ENCODE measurements at regions of chr17 and their contacts with region 1.

Region 1: DNA sequence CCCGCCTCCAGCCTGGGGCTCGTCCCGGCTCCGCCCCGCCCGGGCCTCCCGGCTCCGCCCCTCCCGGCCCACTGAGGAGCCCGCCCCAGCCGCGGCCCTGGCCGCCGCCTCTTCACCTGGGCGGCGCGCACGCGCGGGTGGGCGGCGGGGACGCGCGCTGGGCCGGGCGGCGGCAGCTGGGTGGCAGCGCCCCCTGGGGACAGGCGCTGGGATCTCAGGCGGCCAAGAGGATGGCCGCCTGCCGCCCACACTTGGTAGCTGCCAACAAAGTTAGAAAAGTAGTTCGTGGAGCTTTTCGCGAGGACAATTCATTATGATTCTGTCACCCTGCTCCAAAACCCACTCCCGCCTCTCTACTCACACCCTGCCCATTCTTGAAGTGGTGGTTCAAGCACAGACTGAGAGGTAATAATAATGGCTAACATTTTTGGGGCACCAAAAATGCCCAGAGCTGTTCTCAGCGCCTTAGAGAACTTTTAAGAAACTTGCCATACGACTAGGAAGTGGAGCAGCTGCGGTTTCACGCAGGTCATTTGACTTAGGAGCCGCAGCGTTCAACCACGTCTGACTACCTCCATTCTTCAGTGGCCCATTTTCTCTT is 340 bp upstream of the MYO1D start:
- DNase-seq: peak; percentile 90
- ATAC-seq: peak; percentile 98
- H3K4me3 Mint-ChIP-seq: peak overlapping the region; percentile 63
- H3K27ac Mint-ChIP-seq: peak overlapping the region; percentile 75
- H3K4me1 Mint-ChIP-seq: peaks cover 15% of the 10 kb centered on the region
- H3K27me3 Mint-ChIP-seq: peaks cover 2% of the 10 kb centered on the region
- CTCF ChIP-seq: peak; percentile 59

Region 2: DNA sequence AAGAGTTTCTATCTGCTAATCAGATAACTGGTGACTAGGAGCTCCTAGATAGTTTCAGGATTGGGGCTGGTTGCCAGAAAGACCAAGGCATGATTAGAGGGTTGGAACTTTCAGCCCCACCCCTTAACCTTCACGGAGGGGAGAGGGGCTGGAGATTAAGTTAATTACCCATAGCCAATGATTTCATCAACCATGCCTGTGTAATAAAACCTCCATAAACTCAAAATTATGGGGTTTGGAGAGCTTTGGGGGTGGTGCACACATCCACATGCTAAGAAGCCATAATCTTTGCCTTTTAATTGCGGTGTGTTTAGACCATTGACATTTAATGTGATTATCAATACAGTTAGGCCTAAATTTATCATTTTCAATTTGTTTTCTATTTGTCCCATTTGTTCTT is 228.8 kb before region 1 on chr17:
- CTCF ChIA-PET with region 1: no interaction called
- POLR2A ChIA-PET with region 1: no interaction called
- intact Hi-C with region 1: no loop called
- DNase-seq: no peak
- ATAC-seq: no peak
- H3K4me3 Mint-ChIP-seq: no peak overlapping the region
- H3K27ac Mint-ChIP-seq: no peak overlapping the region
- H3K4me1 Mint-ChIP-seq: no peaks in the 10 kb centered on the region
- H3K27me3 Mint-ChIP-seq: no peaks in the 10 kb centered on the region
- CTCF ChIP-seq: no peak

Region 3: DNA sequence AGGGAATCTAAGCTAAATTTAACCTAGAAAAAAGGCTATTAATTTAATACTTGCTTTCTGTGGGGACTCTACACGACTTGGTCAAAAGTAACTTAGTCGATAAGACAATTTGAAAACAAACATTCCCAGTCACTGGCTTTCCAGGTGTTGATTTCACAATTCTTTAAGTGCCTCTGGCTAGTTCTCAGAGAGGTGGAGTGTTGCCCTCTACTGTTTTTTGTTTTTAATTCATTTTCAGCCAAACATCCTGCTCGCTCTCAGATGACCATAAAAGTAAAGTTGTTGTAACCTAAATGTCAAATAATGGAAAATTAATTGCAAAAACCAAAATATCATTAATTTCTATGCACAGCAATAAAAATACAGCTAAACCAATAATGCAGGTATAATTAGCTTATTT is 107.4 kb before region 1 on chr17:
- CTCF ChIA-PET with region 1: interaction called, 17 read pairs
- POLR2A ChIA-PET with region 1: no interaction called
- intact Hi-C with region 1: no loop called
- DNase-seq: no peak
- ATAC-seq: no peak
- H3K4me3 Mint-ChIP-seq: no peak overlapping the region
- H3K27ac Mint-ChIP-seq: no peak overlapping the region
- H3K4me1 Mint-ChIP-seq: no peaks in the 10 kb centered on the region
- H3K27me3 Mint-ChIP-seq: no peaks in the 10 kb centered on the region
- CTCF ChIP-seq: no peak

Region 4: DNA sequence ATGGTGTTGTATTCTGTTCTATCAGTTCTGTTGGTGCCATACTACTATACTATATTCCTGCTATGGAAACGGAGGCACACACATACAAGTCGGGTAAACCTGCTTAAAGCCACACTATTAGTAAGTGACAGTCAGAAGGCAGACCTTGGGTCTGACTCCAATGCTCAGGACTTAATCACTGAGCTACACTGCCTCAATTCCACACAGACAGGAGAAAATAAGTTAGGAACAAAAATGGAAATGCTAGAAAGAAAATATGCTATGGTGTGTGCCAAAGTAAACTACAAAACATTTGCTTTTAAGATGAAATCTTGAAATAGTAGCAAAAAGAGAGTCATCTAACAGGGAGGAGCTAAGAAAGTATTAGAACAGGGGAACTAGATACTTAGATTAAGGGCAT is 48.4 kb before region 1 on chr17:
- CTCF ChIA-PET with region 1: interaction called, 24 read pairs
- POLR2A ChIA-PET with region 1: no interaction called
- intact Hi-C with region 1: no loop called
- DNase-seq: no peak
- ATAC-seq: no peak
- H3K4me3 Mint-ChIP-seq: no peak overlapping the region
- H3K27ac Mint-ChIP-seq: no peak overlapping the region
- H3K4me1 Mint-ChIP-seq: peaks cover 11% of the 10 kb centered on the region
- H3K27me3 Mint-ChIP-seq: peaks cover 13% of the 10 kb centered on the region
- CTCF ChIP-seq: no peak

Region 5: DNA sequence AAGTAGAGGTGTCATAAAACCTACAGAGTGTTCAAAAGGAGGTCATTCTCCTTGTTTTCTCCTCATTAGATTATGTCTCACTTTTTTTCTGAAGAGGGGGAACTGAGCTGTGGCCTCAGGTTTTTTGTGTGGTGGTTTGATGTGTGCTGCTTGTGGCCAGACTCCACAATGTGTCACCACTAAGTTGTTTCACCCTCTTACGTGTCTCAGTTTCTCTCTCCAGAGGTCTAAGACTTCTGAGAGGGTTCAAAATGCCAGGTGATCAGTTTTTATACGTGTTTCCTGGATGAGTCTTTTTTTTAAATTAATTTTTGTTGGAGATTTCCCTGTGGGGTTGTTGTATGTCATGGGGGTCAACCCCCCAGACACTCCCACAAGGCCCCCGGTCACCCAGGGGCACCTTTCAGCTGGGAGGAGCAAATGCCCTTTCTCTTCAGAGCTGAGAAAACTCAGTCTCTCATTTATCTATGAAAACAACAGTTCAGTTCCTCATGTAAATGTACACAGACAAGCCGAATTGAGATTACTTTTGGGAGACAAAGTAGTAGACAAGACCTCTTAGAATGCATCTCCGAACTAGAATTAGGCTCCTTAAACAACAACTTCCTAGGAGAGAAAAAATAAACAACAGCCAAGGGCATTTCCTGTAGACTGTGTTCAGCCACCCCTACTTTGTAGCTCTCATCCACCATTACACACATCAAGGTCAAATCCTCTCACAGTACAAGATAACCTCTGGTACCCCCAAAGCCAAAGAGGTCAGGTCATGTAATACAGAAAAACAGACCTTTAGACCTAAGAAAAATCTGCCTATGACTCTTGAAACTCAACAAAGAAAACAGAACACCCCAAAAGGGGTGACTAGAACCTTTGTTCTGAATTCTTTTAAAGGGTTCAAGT is 26.8 kb after region 1 on chr17:
- CTCF ChIA-PET with region 1: interaction called, 21 read pairs
- POLR2A ChIA-PET with region 1: no interaction called
- intact Hi-C with region 1: no loop called
- DNase-seq: peak; percentile 62
- ATAC-seq: peak; percentile 89
- H3K4me3 Mint-ChIP-seq: no peak overlapping the region
- H3K27ac Mint-ChIP-seq: peak overlapping the region; percentile 54
- H3K4me1 Mint-ChIP-seq: peaks cover 13% of the 10 kb centered on the region
- H3K27me3 Mint-ChIP-seq: peaks cover 14% of the 10 kb centered on the region
- CTCF ChIP-seq: no peak

Region 6: DNA sequence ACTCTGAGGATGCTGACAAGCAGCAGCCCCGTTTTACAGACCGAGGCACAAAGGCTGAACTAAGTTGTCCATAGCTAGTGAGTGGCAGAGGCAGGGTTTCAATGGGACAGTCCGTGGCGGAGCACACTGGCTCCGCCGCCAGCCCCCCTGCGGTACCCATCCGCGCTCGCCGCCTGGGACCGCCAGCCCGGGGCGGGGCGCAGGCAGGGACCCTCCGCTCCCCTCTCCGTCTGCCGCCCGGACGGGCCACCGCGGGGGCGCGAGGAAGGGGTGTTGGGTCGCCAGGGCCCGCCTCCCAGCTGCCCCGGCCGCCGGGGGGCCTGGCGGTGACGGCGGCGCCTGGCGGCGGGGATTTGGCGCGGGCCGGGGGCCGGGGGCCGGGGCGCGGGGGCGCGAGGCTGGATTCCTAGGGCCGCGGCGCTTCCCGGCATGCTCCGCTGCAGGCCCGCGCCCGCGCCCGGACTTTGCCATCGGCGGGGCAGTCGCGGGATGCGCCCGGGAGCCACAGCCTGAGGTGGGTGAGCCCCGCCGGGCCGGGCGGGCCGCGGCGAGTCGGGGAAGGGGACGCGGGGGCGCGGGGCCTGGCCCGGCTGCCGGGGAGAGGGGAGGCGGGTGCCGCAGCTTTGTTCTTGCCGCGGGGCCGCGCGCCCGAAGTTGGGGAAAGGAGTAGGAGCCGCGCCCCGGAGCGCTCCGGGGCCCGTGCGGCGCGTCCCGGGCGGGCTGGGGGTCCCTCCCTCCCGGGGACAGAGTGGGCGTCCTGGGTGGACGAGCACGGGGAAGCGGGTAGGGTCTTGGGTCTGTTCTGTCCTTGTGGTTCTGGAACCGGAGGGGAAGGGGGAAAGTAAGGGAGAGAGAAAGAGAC is 50.7 kb after region 1 on chr17 and contains the start of gene TMEM98:
- CTCF ChIA-PET with region 1: interaction called, 15 read pairs
- POLR2A ChIA-PET with region 1: interaction called, 3 read pairs
- intact Hi-C with region 1: no loop called
- DNase-seq: peak; percentile 7
- ATAC-seq: peak; percentile 30
- H3K4me3 Mint-ChIP-seq: peak within 1 kb of the TSS; percentile 46
- H3K27ac Mint-ChIP-seq: no peak within 1 kb of the TSS
- H3K4me1 Mint-ChIP-seq: peaks cover 4% of the 10 kb centered on the region
- H3K27me3 Mint-ChIP-seq: peaks cover 33% of the 10 kb centered on the region
- CTCF ChIP-seq: no peak
- total RNA-seq, gene TMEM98: not detected